Naive thymus-derived CD4-positive, alpha-beta T cell (primary cell): ENCODE measurements at regions of chr12 and their contacts with region 1.

Region 1: GRCh38 chr12:82358200-82359114 is at the starts of genes CCDC59 and METTL25:
- DNase-seq: peak; percentile 95 to 100 (median 98)
- ATAC-seq: peak; percentile 94
- H3K4me3 ChIP-seq: peak within 1 kb of the TSS; percentile 93
- H3K4me3 Mint-ChIP-seq: peak within 1 kb of the TSS; percentile 92 to 100 (median 98)
- H3K27ac ChIP-seq: peak within 1 kb of the TSS; percentile 95
- H3K27ac Mint-ChIP-seq: peak within 1 kb of the TSS; percentile 99 to 100 (median 100)
- H3K4me1 ChIP-seq: peaks cover 27 to 31% of the 10 kb centered on the region in 2 donors
- H3K4me1 Mint-ChIP-seq: peaks cover 24 to 80% (median 69%) of the 10 kb centered on the region in 7 donors
- H3K27me3 ChIP-seq: no peaks in the 10 kb centered on the region
- H3K27me3 Mint-ChIP-seq: peaks cover 0 to 4% (median 0%) of the 10 kb centered on the region in 5 donors
- total RNA-seq, gene CCDC59: 44.9 to 150 (median 70.8) TPM
- total RNA-seq, gene METTL25: 8.6 to 27.5 (median 14.5) TPM

Region 2: GRCh38 chr12:81759215-81760051 is 599.0 kb before region 1 on chr12 and contains the start of gene PPFIA2:
- CTCF ChIA-PET with region 1: no interaction called
- POLR2A ChIA-PET with region 1: no interaction called
- intact Hi-C with region 1: loop called in 1 of 2 experiments (anchors 1 kb)
- DNase-seq: peak in 6 of 9 donors; percentile 3 to 27 (median 22)
- ATAC-seq: peak; percentile 47
- H3K4me3 ChIP-seq: peak within 1 kb of the TSS; percentile 26
- H3K4me3 Mint-ChIP-seq: peak within 1 kb of the TSS; percentile 58 to 83 (median 75)
- H3K27ac ChIP-seq: no peak within 1 kb of the TSS
- H3K27ac Mint-ChIP-seq: no peak within 1 kb of the TSS
- H3K4me1 ChIP-seq: no peaks in the 10 kb centered on the region
- H3K4me1 Mint-ChIP-seq: peaks cover 10 to 19% (median 15%) of the 10 kb centered on the region in 7 donors
- H3K27me3 ChIP-seq: peaks cover 0 to 2% of the 10 kb centered on the region in 2 donors
- H3K27me3 Mint-ChIP-seq: peaks cover 43 to 52% (median 46%) of the 10 kb centered on the region in 5 donors
- total RNA-seq, gene PPFIA2: not detected

Region 3: GRCh38 chr12:81942594-81942993 is 415.9 kb before region 1 on chr12:
- CTCF ChIA-PET with region 1: no interaction called
- POLR2A ChIA-PET with region 1: interaction called, 3 read pairs
- intact Hi-C with region 1: loop called in 1 of 2 experiments (anchors 5 kb)
- DNase-seq: peak in 7 of 9 donors; percentile 8 to 58 (median 51)
- ATAC-seq: peak; percentile 86
- H3K4me3 ChIP-seq: peak overlapping the region; percentile 2
- H3K4me3 Mint-ChIP-seq: peak overlapping the region; percentile 58 to 86 (median 76)
- H3K27ac ChIP-seq: peak overlapping the region; percentile 10
- H3K27ac Mint-ChIP-seq: peak overlapping the region; percentile 26 to 89 (median 78)
- H3K4me1 ChIP-seq: peaks cover 12 to 22% of the 10 kb centered on the region in 2 donors
- H3K4me1 Mint-ChIP-seq: peaks cover 29 to 73% (median 63%) of the 10 kb centered on the region in 7 donors
- H3K27me3 ChIP-seq: no peaks in the 10 kb centered on the region
- H3K27me3 Mint-ChIP-seq: no peaks in the 10 kb centered on the region

Region 4: GRCh38 chr12:82047446-82047845 is 311.0 kb before region 1 on chr12:
- CTCF ChIA-PET with region 1: no interaction called
- POLR2A ChIA-PET with region 1: no interaction called
- intact Hi-C with region 1: no loop called
- DNase-seq: no peak
- ATAC-seq: no peak
- H3K4me3 ChIP-seq: no peak overlapping the region
- H3K4me3 Mint-ChIP-seq: no peak overlapping the region
- H3K27ac ChIP-seq: no peak overlapping the region
- H3K27ac Mint-ChIP-seq: no peak overlapping the region
- H3K4me1 ChIP-seq: no peaks in the 10 kb centered on the region
- H3K4me1 Mint-ChIP-seq: no peaks in the 10 kb centered on the region
- H3K27me3 ChIP-seq: no peaks in the 10 kb centered on the region
- H3K27me3 Mint-ChIP-seq: peaks cover 2 to 9% (median 5%) of the 10 kb centered on the region in 5 donors